ENCODE measurements at regions of chr12 and their contacts with region 1.

Region 1: GRCh38 chr12:90163975-90164374 is 455.3 kb upstream of the ATP2B1 start:
- DNase-seq: no peak
- CTCF ChIP-seq: no peak

Region 2: GRCh38 chr12:89862511-89863179 is 301.3 kb before region 1 on chr12:
- CTCF ChIA-PET with region 1: no interaction called
- POLR2A ChIA-PET with region 1: no interaction called
- DNase-seq: peak; percentile 43
- CTCF ChIP-seq: no peak

Region 3: DNA sequence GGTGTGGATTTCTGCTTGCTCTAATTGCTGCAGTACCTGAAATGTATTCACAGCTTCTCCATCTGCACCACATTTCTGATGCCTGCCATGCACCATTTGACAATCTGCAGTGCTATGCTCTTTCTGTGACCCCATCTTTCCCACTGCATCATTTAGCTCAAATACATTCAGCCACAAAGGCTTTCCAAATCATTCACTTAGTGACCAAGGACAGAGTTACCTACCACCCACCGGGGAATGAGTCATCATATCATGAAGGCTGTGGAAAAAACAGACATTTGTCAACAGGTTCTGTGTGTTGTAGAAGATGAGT is 10.2 kb after region 1 on chr12:
- CTCF ChIA-PET with region 1: interaction called, 10 read pairs
- POLR2A ChIA-PET with region 1: no interaction called
- DNase-seq: no peak
- CTCF ChIP-seq: no peak